ENCODE measurements at regions of chr3 and their contacts with region 1.

Region 1: GRCh38 chr3:46349485-46350261 is 4.2 kb upstream of the CCR2 start:
- DNase-seq: peak in 2 of 9 experiments; percentile 44 to 65
- ATAC-seq: peak; percentile 45
- H3K4me3 ChIP-seq: peak overlapping the region in 1 of 2 experiments; percentile 11
- H3K4me3 Mint-ChIP-seq: peak overlapping the region; percentile 33
- H3K27ac ChIP-seq: peak overlapping the region in 1 of 2 experiments; percentile 62
- H3K27ac Mint-ChIP-seq: peak overlapping the region; percentile 46
- H3K4me1 ChIP-seq: peaks cover 44% of the 10 kb centered on the region
- H3K4me1 Mint-ChIP-seq: peaks cover 66% of the 10 kb centered on the region
- H3K27me3 ChIP-seq: no peaks in the 10 kb centered on the region
- H3K27me3 Mint-ChIP-seq: no peaks in the 10 kb centered on the region
- CTCF ChIP-seq: no peak

Region 2: DNA sequence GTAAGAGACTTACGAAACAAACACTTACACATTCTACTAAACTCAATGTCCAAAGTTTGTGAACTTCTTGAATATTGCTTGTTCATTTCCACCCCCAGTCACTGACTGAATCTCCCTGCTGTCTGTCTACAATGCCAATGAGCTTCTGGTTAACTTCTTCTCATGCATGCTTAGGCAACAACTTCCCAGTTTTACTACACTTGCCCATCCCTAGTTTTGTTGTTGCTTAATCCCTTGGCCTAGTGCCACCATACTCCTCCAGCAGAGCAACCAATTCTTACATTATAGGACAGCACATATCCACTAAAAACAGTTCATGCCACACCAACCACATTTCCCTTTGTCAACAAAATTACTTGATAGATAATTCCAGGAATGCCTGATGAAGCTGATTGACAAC is 36.7 kb before region 1 on chr3:
- CTCF ChIA-PET with region 1: no interaction called
- POLR2A ChIA-PET with region 1: no interaction called
- intact Hi-C with region 1: loop called in 1 of 2 experiments (anchors 5 kb)
- DNase-seq: peak in 1 of 9 experiments; percentile 24
- ATAC-seq: no peak
- H3K4me3 ChIP-seq: no peak overlapping the region
- H3K4me3 Mint-ChIP-seq: no peak overlapping the region
- H3K27ac ChIP-seq: no peak overlapping the region
- H3K27ac Mint-ChIP-seq: no peak overlapping the region
- H3K4me1 ChIP-seq: no peaks in the 10 kb centered on the region
- H3K4me1 Mint-ChIP-seq: no peaks in the 10 kb centered on the region
- H3K27me3 ChIP-seq: no peaks in the 10 kb centered on the region
- H3K27me3 Mint-ChIP-seq: no peaks in the 10 kb centered on the region
- CTCF ChIP-seq: no peak

Region 3: GRCh38 chr3:46378426-46378942 is 28.8 kb after region 1 on chr3:
- CTCF ChIA-PET with region 1: interaction called, 12 read pairs
- POLR2A ChIA-PET with region 1: interaction called, 3 read pairs
- intact Hi-C with region 1: no loop called
- DNase-seq: peak; percentile 26 to 76 (median 64)
- ATAC-seq: peak; percentile 53
- H3K4me3 ChIP-seq: no peak overlapping the region
- H3K4me3 Mint-ChIP-seq: no peak overlapping the region
- H3K27ac ChIP-seq: no peak overlapping the region
- H3K27ac Mint-ChIP-seq: peak overlapping the region; percentile 28
- H3K4me1 ChIP-seq: peaks cover 33% of the 10 kb centered on the region
- H3K4me1 Mint-ChIP-seq: peaks cover 60% of the 10 kb centered on the region
- H3K27me3 ChIP-seq: no peaks in the 10 kb centered on the region
- H3K27me3 Mint-ChIP-seq: no peaks in the 10 kb centered on the region
- CTCF ChIP-seq: peak; percentile 55

Region 4: GRCh38 chr3:46607603-46608028 is 257.9 kb after region 1 on chr3:
- CTCF ChIA-PET with region 1: no interaction called
- POLR2A ChIA-PET with region 1: no interaction called
- intact Hi-C with region 1: no loop called
- DNase-seq: no peak
- ATAC-seq: no peak
- H3K4me3 ChIP-seq: no peak overlapping the region
- H3K4me3 Mint-ChIP-seq: no peak overlapping the region
- H3K27ac ChIP-seq: no peak overlapping the region
- H3K27ac Mint-ChIP-seq: no peak overlapping the region
- H3K4me1 ChIP-seq: no peaks in the 10 kb centered on the region
- H3K4me1 Mint-ChIP-seq: no peaks in the 10 kb centered on the region
- H3K27me3 ChIP-seq: no peaks in the 10 kb centered on the region
- H3K27me3 Mint-ChIP-seq: no peaks in the 10 kb centered on the region
- CTCF ChIP-seq: no peak